Colonic mucosa (tissue), 4 donors: ENCODE measurements at regions of chr2 and their contacts with region 1.

Region 1: DNA sequence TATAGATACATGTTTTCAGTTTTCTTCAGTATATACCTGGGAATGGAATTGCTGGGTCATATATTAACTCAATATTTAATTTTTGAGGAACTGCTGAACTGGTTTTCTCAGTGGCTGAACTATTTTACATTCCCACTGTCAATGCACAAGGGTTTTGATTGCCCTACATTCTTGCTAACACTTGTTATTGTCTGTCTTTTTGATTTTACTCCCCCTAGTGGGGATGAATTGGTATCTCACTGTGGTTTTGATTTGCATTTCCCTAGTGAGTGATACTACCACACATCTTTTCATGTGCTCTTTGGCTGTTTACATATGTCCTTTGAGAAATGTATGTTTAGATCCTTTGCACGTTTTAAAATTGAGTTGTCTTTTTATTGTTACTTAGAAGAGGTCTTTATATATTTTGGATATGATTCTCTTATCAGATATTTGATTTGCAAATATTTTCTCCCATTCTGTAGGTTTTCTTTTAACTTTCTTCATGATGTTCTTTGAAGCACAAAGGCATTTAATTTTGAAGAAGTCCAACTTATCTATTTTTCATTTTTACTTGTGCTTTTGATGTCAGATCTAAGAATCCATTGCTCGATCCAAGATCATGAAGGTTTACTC is 36.2 kb downstream of the ASB1 start:
- DNase-seq: no peak
- H3K4me3 ChIP-seq: no peak overlapping the region
- H3K27ac ChIP-seq: no peak overlapping the region
- H3K4me1 ChIP-seq: no peaks in the 10 kb centered on the region
- H3K27me3 ChIP-seq: no peaks in the 10 kb centered on the region
- CTCF ChIP-seq: peak; percentile 67

Region 2: DNA sequence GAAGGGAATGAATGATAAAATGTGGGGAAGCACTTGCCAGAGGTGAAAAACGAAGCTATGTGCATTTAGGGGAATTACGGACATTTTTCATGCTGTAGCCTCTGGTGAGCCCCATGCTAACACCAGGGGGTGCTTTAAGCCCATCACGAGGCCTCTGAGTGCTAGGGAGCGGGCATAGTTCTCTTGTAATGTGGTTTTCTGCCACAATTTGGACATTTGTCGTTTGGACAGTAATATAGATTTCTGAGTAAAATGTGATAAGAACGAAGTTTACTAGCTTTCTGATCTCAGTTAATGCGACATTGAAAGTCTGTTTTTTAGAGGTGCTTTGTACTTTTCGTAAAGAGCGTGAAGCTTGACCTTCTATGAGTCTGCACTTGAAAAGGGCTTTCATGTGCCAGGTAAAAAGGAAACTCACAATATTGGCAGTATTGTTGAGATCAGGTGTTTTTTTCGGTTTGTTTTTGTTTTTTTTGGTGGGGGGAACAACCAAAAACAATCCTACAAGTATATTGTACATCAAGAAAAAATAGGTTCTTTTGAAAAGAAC is 92.0 kb before region 1 on chr2:
- intact Hi-C with region 1: loop called (anchors 5 kb)
- DNase-seq: peak; percentile 73
- H3K4me3 ChIP-seq: no peak overlapping the region
- H3K27ac ChIP-seq: no peak overlapping the region
- H3K4me1 ChIP-seq: no peaks in the 10 kb centered on the region
- H3K27me3 ChIP-seq: no peaks in the 10 kb centered on the region
- CTCF ChIP-seq: peak; percentile 75

Region 3: GRCh38 chr2:238415036-238415764 is 47.7 kb before region 1 on chr2:
- intact Hi-C with region 1: no loop called
- DNase-seq: no peak
- H3K4me3 ChIP-seq: no peak overlapping the region
- H3K27ac ChIP-seq: no peak overlapping the region
- H3K4me1 ChIP-seq: no peaks in the 10 kb centered on the region
- H3K27me3 ChIP-seq: no peaks in the 10 kb centered on the region
- CTCF ChIP-seq: no peak

Region 4: DNA sequence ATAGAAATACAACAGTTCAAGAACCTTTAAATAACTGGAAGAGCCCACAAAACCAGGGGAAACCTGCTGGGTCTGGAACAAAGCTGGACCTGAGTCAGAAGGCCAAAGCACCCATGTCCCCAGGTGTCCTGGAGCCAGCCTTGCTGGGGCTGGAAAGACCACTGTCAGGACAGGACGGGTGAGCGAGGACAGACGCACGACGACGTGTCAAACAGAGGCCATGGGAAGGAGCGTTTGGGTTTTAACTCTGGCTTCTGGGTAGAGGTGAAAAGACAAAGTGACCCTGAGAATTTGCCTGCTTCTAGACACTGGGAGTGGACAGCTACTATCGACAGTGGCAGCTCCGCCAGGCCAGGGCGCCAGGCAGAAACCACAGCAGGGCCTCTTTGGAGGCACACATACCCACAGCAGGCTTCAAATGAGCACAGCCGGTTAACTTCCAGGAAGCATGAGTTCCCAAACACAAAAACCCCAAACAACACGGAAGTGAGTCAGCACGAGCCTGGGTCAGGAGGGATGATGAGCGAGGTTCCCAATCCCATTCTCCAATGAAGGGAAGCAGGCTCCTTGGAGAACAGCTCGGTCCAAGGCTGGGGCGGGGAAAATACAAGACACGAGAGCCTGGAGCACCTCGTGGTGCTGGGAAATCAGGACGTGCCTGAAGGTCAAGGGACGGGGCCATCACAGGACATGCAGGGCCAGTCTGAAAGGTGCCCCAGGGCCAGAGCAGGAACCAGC is 593.0 kb after region 1 on chr2:
- intact Hi-C with region 1: no loop called
- DNase-seq: no peak
- H3K4me3 ChIP-seq: no peak overlapping the region
- H3K27ac ChIP-seq: no peak overlapping the region
- H3K4me1 ChIP-seq: no peaks in the 10 kb centered on the region
- H3K27me3 ChIP-seq: no peaks in the 10 kb centered on the region
- CTCF ChIP-seq: no peak